H1 (cell line): ENCODE measurements at regions of chr11 and their contacts with region 1.

Region 1: DNA sequence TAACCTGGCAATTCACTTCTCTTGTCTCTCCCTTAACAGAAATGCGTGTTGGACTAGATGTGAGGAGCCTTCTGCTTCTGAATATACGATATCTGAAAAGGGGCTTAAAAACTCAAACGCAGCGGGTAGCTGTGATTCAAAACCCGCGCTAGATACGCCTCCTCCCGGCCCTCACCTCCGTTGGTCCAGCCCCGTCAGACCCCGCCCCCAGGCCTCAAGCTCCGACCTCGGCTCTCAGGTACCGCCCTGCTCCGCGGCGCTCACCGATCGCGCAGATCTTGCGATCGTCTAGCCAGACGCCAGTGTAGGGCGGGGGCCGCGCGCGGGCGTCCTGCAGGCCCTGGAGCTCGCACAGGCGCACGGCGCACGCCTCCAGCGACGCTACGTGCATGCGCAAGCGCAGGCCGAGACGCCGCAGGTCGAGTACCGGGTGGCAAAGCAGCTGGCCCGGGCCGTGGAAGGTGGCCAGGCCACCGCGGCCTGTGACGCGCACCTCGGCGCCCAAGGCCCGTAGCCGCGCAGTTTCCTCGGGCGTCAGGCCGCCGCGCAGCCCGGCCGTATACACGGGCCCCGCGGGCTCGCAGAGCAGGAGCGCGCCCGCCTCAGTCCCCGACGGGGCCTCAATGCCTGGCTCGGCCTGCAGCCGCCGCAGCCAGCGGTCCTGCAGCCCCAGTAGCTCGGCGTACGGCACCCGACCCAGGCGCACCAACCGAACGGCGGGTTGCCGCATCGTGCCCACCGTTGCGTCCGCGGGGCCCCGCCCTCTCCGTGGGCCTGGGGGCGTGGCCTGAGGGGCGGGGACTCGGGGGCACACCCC is at the start of gene LIPT2:
- DNase-seq: peak; percentile 94 to 96
- H3K4me3 ChIP-seq: peak within 1 kb of the TSS; percentile 61 to 81 (median 74)
- H3K27ac ChIP-seq: peak within 1 kb of the TSS; percentile 91
- H3K4me1 ChIP-seq: peaks cover 0 to 7% (median 4%) of the 10 kb centered on the region in 4 experiments; a peak in 4 of 7 replicates
- H3K27me3 ChIP-seq: no peaks in the 10 kb centered on the region
- CTCF ChIP-seq: no peak
- EP300 ChIP-seq: no peak
- POLR2A ChIP-seq: peak; percentile 87 to 91
- RAD21 ChIP-seq: no peak
- total RNA-seq, gene LIPT2: 6.4 and 7.7 TPM in 2 replicates

Region 2: GRCh38 chr11:74418509-74418895 is 74.7 kb before region 1 on chr11:
- CTCF ChIA-PET with region 1: no interaction called
- POLR2A ChIA-PET with region 1: no interaction called
- DNase-seq: no peak
- H3K4me3 ChIP-seq: no peak overlapping the region
- H3K27ac ChIP-seq: no peak overlapping the region
- H3K4me1 ChIP-seq: no peaks in the 10 kb centered on the region; a peak in 1 of 7 replicates
- H3K27me3 ChIP-seq: peaks cover 0 to 1% (median 0%) of the 10 kb centered on the region in 4 experiments; a peak in 1 of 7 replicates
- CTCF ChIP-seq: no peak
- EP300 ChIP-seq: no peak
- POLR2A ChIP-seq: no peak
- RAD21 ChIP-seq: no peak

Region 3: GRCh38 chr11:74466916-74467885 is 26.0 kb before region 1 on chr11 and contains the start of gene KCNE3:
- CTCF ChIA-PET with region 1: interaction called, 3 read pairs
- POLR2A ChIA-PET with region 1: interaction called, 18 read pairs
- DNase-seq: peak in 1 of 2 experiments; percentile 58
- H3K4me3 ChIP-seq: peak within 1 kb of the TSS; percentile 45 to 59 (median 48)
- H3K27ac ChIP-seq: no peak within 1 kb of the TSS
- H3K4me1 ChIP-seq: peaks cover 4 to 12% (median 10%) of the 10 kb centered on the region in 4 experiments
- H3K27me3 ChIP-seq: peaks cover 0 to 5% (median 0%) of the 10 kb centered on the region in 4 experiments; a peak in 3 of 7 replicates
- CTCF ChIP-seq: no peak
- EP300 ChIP-seq: no peak
- POLR2A ChIP-seq: no peak
- RAD21 ChIP-seq: 0 out of 4 replicates have a peak, but pooled peaks of 1 of the 2 experiments have one; percentile 0
- total RNA-seq, gene KCNE3: 2.8 and 3.5 TPM in 2 replicates

Region 4: GRCh38 chr11:74504100-74504695 is 11.0 kb after region 1 on chr11:
- CTCF ChIA-PET with region 1: interaction called, 5 read pairs
- POLR2A ChIA-PET with region 1: interaction called, 14 read pairs
- DNase-seq: no peak
- H3K4me3 ChIP-seq: no peak overlapping the region
- H3K27ac ChIP-seq: no peak overlapping the region
- H3K4me1 ChIP-seq: no peaks in the 10 kb centered on the region
- H3K27me3 ChIP-seq: no peaks in the 10 kb centered on the region
- CTCF ChIP-seq: no peak
- EP300 ChIP-seq: no peak
- POLR2A ChIP-seq: no peak
- RAD21 ChIP-seq: no peak

Region 5: DNA sequence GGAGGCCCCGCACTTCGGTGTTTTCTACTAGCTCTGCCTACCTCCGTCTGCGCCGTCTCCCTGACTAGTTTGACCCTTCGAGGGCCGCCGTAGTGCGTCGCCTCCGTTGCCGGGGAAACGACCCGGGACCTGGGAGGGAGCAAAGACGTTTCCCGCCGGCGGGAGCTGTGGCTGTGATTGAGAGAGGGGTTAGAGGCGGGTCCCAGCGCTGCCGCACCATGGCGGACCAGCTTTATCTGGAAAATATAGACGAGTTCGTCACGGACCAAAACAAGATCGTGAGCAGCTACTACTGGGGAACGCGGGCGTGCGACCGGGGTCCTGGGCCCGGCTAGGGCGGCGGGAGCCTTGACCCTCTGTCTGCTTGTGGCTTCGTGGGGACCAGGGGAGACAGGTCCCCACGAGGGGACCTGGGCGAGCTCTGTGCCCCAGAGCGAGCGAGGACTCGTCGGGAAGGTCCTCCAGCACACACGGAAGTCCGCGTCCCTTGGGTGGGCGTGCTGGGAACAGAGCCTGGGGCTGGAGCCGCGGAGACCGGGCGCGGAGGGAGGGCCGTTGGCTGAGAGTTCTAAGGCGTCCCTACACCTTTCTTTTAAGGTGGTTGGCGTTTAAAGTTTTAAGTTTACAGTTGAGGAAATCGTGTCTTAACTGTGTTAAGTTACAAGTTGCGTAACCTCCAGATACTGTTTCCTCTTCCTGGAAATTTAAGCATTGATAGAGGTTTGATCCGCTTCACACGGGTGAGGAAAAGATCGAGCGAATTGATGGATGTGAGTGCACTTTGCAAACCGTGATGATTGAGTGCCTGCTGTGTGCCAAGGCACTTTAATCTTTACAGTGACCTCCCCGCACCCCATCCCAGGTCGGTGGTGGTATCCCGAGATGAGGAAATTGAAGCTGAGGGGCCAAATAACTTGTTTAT is 99.5 kb after region 1 on chr11 and contains the start of gene POLD3:
- CTCF ChIA-PET with region 1: no interaction called
- POLR2A ChIA-PET with region 1: interaction called, 12 read pairs
- DNase-seq: peak; percentile 70 to 97
- H3K4me3 ChIP-seq: peak within 1 kb of the TSS; percentile 93 to 99 (median 97)
- H3K27ac ChIP-seq: peak within 1 kb of the TSS; percentile 89
- H3K4me1 ChIP-seq: no peaks in the 10 kb centered on the region; a peak in 1 of 7 replicates
- H3K27me3 ChIP-seq: no peaks in the 10 kb centered on the region
- CTCF ChIP-seq: no peak
- EP300 ChIP-seq: no peak
- POLR2A ChIP-seq: peak; percentile 63 to 79
- RAD21 ChIP-seq: no peak
- total RNA-seq, gene POLD3: 29.3 and 30.5 TPM in 2 replicates